Activated naive CD4-positive, alpha-beta T cell treated with anti-CD3 and anti-CD28 coated beads for 36 hours (primary cell): ENCODE measurements at regions of chr12 and their contacts with region 1.

Region 1: DNA sequence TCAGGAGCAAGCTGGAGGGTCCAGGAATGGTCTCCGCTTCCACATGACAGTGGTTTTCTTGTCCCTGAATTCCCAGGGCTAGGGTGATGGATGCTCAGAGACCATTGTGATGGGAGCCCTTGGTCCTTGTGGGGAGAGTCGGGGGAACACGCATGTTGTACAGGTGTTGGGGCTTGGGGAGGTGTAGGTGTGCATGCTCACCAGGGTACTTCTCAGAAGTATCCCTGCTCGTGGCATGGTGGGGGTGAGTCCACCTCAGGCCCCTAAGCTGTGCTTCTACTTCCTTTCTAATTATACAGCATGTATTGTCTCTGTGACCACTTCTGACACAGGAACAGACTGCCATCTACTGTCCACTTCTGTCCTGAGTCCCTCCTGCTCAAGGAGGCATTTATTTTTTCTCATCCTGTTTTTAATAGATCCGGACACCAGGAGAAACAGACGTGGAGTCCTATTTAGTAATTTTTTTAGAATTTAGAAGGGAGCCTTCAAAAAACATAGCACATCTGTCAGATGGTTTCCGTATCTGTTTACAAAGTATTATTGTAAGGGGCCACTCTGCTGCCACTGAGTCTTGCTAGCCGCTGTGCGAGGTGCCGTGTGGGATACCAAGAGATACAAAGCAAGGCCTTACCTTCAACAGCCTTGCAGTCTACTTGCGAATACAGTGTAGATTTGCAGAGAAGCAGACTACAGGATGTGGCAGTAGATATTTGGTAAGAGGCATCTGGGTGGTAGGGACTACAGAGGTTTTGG is 10.5 kb downstream of the NTF3 start:
- DNase-seq: peak; percentile 18
- H3K4me3 Mint-ChIP-seq: no peak overlapping the region
- H3K27ac Mint-ChIP-seq: no peak overlapping the region
- H3K4me1 Mint-ChIP-seq: no peaks in the 10 kb centered on the region
- H3K27me3 Mint-ChIP-seq: peaks cover 21% of the 10 kb centered on the region

Region 2: DNA sequence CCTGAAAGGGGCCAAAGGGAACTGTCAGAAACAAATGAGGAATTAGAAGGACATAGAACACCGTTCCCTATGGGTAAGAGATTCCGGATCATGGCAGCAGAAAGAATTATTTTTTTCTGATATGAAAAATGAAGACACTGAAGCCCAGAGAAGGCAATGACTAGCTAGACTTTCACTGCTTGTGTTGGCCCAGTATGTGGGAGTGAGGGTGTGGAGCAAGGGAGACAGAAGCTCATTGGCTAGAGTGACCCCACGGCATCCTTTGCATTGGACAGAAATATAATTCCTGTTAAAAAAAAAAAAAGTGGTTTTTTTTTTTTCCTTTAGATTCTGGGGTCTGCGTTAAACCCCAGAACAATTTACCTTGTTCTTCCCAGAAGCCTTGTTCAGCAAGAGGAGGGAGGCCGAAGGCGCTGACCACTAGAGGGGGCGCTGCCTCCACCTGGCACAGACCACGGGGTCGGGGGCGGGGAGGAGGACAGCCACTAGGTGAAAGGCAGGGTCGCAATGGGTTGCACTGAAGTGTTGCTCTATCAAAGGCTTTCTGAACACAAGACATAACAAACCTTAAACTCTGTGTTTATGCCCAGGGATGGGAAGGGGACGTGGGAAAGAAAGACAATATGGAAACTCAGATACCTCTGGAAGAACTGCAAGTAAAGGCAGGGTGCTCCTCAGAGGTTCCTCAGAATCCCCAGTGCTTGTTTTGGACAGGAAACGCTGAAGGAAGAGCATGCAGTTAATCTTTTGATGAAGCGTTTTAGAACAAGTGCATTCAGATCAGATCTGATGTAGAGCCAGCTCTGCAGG is 241.9 kb before region 1 on chr12:
- CTCF ChIA-PET with region 1: no interaction called
- intact Hi-C with region 1: loop called (anchors 10 kb)
- DNase-seq: peak; percentile 46
- H3K4me3 Mint-ChIP-seq: no peak overlapping the region
- H3K27ac Mint-ChIP-seq: no peak overlapping the region
- H3K4me1 Mint-ChIP-seq: no peaks in the 10 kb centered on the region
- H3K27me3 Mint-ChIP-seq: peaks cover 21% of the 10 kb centered on the region